IMR-90 (cell line): ENCODE measurements at regions of chr14 and their contacts with region 1.

Region 1: GRCh38 chr14:44961604-44962333 is at the starts of genes KLHL28 and TOGARAM1:
- DNase-seq: peak; percentile 100
- ATAC-seq: peak; percentile 88
- H3K4me3 ChIP-seq: peak within 1 kb of the TSS; percentile 68
- H3K27ac ChIP-seq: peak within 1 kb of the TSS; percentile 65
- H3K4me1 ChIP-seq: peaks cover 3% of the 10 kb centered on the region; the same call in 1 of the 2 replicates
- H3K27me3 ChIP-seq: no peaks in the 10 kb centered on the region
- CTCF ChIP-seq: no peak
- POLR2A ChIP-seq: peak; percentile 93
- RAD21 ChIP-seq: no peak
- total RNA-seq, gene KLHL28: 7.7 and 11.4 TPM in 2 replicates
- total RNA-seq, gene TOGARAM1: 11.1 and 13.4 TPM in 2 replicates

Region 2: DNA sequence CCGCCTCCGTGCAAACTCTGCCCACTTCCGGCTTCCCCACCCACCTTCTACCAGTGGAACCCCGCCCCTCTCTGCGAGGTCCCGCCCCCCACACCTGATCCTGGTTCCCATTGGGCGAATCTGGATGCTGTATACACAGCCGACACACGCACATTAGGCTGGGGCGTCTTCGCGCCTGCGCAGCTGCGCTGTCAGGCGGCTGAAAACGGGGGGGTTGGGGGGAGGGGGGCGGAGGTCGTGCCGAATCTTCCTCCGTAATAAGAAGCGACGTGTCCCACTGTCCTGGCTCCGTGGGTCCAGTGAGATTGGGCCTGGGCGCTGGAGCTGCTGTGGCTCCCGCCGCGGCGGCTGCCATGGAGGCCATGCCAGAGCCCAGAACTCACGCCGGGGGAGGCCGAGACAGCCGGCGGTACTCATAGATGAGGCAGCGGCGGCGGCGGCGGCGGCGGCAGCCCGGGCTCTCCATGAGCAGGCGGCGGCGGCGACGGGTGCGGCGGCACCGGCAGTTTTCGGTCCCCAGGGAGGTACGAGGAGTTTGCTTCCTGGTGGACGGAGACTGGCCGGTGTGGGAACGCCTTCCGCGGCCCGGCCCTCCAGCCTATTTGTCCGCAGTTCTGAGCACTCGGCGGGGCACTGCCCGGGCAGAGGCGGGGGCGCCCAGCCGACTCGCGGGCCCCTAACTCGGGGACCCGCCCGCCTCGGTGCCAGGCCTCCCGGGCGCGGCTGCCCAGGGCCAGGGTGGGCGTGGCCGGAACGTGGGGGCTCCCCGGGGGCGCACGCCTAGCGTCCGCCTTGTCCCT is 64.5 kb before region 1 on chr14:
- CTCF ChIA-PET with region 1: no interaction called
- POLR2A ChIA-PET with region 1: no interaction called
- dilution Hi-C with region 1: no loop called
- in situ Hi-C with region 1: no loop called
- intact Hi-C with region 1: loop called (anchors 1 kb)
- DNase-seq: peak; percentile 97
- ATAC-seq: peak; percentile 92
- H3K4me3 ChIP-seq: peak overlapping the region; percentile 96
- H3K27ac ChIP-seq: peak overlapping the region; percentile 98
- H3K4me1 ChIP-seq: peaks cover 8% of the 10 kb centered on the region
- H3K27me3 ChIP-seq: no peaks in the 10 kb centered on the region
- CTCF ChIP-seq: no peak
- POLR2A ChIP-seq: peak; percentile 85
- RAD21 ChIP-seq: no peak

Region 3: GRCh38 chr14:44917060-44917459 is 44.7 kb before region 1 on chr14:
- CTCF ChIA-PET with region 1: no interaction called
- POLR2A ChIA-PET with region 1: no interaction called
- dilution Hi-C with region 1: no loop called
- in situ Hi-C with region 1: no loop called
- intact Hi-C with region 1: no loop called
- DNase-seq: no peak
- ATAC-seq: no peak
- H3K4me3 ChIP-seq: no peak overlapping the region
- H3K27ac ChIP-seq: no peak overlapping the region
- H3K4me1 ChIP-seq: no peaks in the 10 kb centered on the region
- H3K27me3 ChIP-seq: no peaks in the 10 kb centered on the region; the same call in 1 of the 2 replicates
- CTCF ChIP-seq: no peak
- POLR2A ChIP-seq: no peak
- RAD21 ChIP-seq: no peak

Region 4: DNA sequence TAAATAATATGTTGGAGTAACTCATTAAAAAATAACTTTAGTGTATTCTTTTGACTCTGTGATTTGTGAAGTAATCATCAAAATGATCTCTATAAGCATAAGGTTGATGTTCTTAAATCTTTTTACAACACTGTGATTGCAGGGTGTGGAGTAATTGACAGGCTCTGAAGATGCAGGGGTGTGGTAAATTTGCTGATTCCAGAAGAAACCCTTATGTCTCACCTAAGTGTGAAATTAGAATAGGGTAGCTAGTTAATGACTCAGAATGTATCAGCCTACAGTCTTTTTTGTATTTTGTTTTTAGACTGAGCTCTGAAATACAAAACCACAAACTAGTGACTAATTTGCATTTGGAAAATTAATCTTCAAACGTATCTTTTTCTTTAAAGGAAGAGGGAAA is 128.0 kb after region 1 on chr14:
- CTCF ChIA-PET with region 1: no interaction called
- POLR2A ChIA-PET with region 1: no interaction called
- dilution Hi-C with region 1: no loop called
- in situ Hi-C with region 1: no loop called
- intact Hi-C with region 1: loop called (anchors 5 kb)
- DNase-seq: peak; percentile 61
- ATAC-seq: peak; percentile 52; the same call in 1 of the 2 replicates
- H3K4me3 ChIP-seq: no peak overlapping the region
- H3K27ac ChIP-seq: no peak overlapping the region
- H3K4me1 ChIP-seq: peaks cover 2% of the 10 kb centered on the region; the same call in 1 of the 2 replicates
- H3K27me3 ChIP-seq: no peaks in the 10 kb centered on the region
- CTCF ChIP-seq: no peak
- POLR2A ChIP-seq: no peak
- RAD21 ChIP-seq: no peak

Region 5: DNA sequence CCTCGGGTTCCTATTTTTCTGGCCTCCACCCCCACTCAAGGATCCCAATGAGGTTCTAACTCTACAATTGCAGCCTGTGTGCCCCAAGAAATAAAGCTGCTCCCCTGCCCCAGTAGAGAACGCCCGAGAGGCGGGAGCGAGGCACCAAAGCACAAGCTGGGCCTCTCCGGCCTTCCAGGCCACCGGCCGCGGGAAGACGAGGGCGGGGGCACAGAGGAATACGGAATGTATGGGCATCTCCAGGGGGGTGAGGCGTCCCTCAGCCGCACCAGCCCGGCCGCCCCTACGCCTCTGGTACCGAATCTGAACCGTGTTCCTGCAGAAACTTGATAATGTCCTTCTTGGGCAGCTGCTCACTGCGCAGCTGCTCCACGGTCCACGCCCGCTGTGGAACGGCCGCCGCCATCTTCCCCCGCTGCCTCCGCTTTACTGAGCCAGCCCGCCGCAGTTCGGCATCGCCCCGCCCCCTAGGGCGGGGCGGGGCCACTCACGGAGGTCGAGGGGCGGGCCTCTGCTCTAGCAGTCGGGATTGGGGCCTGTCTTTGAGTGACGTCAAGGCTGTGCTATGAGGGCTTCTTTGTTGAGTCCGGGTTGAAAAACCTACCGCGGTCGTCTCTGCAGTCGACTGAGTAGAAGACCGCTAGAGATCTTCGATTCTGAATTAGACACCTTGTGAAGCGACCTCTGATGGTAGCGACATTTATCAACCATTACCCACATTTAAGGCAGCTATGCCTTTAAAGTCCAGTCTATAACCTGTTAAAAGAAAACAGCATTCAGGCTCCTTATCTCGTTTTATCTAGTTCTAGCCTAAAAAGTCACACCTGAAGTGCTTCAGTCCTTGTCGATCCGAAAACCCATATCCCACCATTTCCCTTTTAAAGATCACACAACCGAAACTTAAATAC is 172.5 kb after region 1 on chr14 and contains the start of gene FKBP3:
- CTCF ChIA-PET with region 1: no interaction called
- POLR2A ChIA-PET with region 1: interaction called, 3 read pairs
- dilution Hi-C with region 1: no loop called
- in situ Hi-C with region 1: loop called (anchors 10 kb)
- intact Hi-C with region 1: loop called (anchors 1 kb)
- DNase-seq: peak; percentile 99
- ATAC-seq: peak; percentile 96
- H3K4me3 ChIP-seq: peak within 1 kb of the TSS; percentile 91
- H3K27ac ChIP-seq: peak within 1 kb of the TSS; percentile 89
- H3K4me1 ChIP-seq: no peaks in the 10 kb centered on the region
- H3K27me3 ChIP-seq: no peaks in the 10 kb centered on the region
- CTCF ChIP-seq: 0 out of 2 replicates have a peak, but pooled peaks have one; percentile 16
- POLR2A ChIP-seq: peak; percentile 72
- RAD21 ChIP-seq: no peak; the same call in 1 of the 2 replicates
- total RNA-seq, gene FKBP3: 8.6 and 31.1 TPM in 2 replicates